ENCODE measurements at regions of chr3 and their contacts with region 1.

Region 1: GRCh38 chr3:64685800-64686445 is 1.9 kb downstream of the ADAMTS9 start:
- DNase-seq: peak; percentile 95

Region 2: GRCh38 chr3:64533617-64534317 is 152.2 kb before region 1 on chr3:
- intact Hi-C with region 1: loop called (anchors 5 kb)
- DNase-seq: peak; percentile 83

Region 3: DNA sequence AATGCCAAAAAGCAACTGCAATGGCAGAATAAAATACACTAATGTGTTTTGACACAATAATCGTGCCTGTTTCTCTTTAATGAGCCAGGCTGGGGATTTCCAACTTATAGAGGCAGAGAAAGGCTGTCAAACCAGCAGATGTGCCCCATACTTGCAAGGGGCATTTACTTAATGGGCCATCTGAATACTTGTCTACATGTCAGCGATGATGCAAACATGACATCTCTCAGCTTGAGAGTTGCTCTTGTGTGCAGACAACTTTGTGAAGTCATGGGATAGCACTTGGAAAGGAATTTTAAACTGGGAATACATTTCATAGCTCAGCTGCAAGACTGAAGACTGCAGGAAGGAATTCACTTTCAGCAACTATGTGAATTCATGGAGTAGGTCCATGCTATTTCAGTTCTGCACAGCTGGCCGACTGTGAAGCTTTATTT is 129.3 kb after region 1 on chr3:
- intact Hi-C with region 1: loop called (anchors 5 kb)
- DNase-seq: no peak

Region 4: DNA sequence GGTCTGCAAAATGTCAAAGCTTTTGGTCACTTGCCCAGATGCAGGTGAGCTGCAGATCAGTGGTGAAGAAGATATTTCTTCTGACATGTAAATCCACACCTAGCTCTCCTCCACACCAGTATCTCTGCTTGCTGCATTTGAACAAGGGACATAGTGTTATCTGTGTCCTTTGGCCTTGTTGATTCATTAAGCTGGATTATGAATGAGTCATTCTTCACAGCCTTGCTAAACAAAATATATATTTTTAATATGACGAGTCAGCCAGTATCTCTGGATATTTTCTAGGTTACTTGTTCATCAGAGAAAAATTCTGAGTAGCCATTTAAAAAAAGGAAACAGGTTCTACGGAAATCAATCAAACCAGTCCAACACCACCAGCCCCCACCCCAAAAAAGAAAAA is 192.4 kb after region 1 on chr3:
- intact Hi-C with region 1: no loop called
- DNase-seq: no peak

Region 5: GRCh38 chr3:65170390-65171042 is 484.6 kb after region 1 on chr3:
- intact Hi-C with region 1: loop called (anchors 1 kb)
- DNase-seq: peak; percentile 88

Region 6: GRCh38 chr3:65672871-65673815 is 987.2 kb after region 1 on chr3:
- intact Hi-C with region 1: loop called (anchors 10 kb)
- DNase-seq: no peak